ENCODE measurements at regions of chr7 and their contacts with region 1.

Region 1: GRCh38 chr7:148722340-148723165 is 23.9 kb downstream of the CUL1 start:
- DNase-seq: peak in 1 of 2 donors; percentile 46
- ATAC-seq: peak in 1 of 3 donors; percentile 12
- H3K4me3 ChIP-seq: no peak overlapping the region
- H3K4me3 Mint-ChIP-seq: peak overlapping the region; percentile 50
- H3K27ac ChIP-seq: no peak overlapping the region
- H3K27ac Mint-ChIP-seq: peak overlapping the region; percentile 63 to 77
- H3K4me1 ChIP-seq: peaks cover 49% of the 10 kb centered on the region
- H3K4me1 Mint-ChIP-seq: peaks cover 86 to 92% of the 10 kb centered on the region in 2 donors
- H3K27me3 ChIP-seq: no peaks in the 10 kb centered on the region
- H3K27me3 Mint-ChIP-seq: no peaks in the 10 kb centered on the region
- CTCF ChIP-seq: no peak

Region 2: GRCh38 chr7:148708026-148708885 is 14.3 kb before region 1 on chr7:
- intact Hi-C with region 1: loop called (anchors 1 kb)
- DNase-seq: no peak
- ATAC-seq: peak; percentile 77 to 82 (median 78)
- H3K4me3 ChIP-seq: no peak overlapping the region
- H3K4me3 Mint-ChIP-seq: peak overlapping the region; percentile 63
- H3K27ac ChIP-seq: peak overlapping the region; percentile 0
- H3K27ac Mint-ChIP-seq: peak overlapping the region; percentile 56 to 86
- H3K4me1 ChIP-seq: peaks cover 23% of the 10 kb centered on the region
- H3K4me1 Mint-ChIP-seq: peaks cover 69 to 72% of the 10 kb centered on the region in 2 donors
- H3K27me3 ChIP-seq: no peaks in the 10 kb centered on the region
- H3K27me3 Mint-ChIP-seq: no peaks in the 10 kb centered on the region
- CTCF ChIP-seq: no peak

Region 3: DNA sequence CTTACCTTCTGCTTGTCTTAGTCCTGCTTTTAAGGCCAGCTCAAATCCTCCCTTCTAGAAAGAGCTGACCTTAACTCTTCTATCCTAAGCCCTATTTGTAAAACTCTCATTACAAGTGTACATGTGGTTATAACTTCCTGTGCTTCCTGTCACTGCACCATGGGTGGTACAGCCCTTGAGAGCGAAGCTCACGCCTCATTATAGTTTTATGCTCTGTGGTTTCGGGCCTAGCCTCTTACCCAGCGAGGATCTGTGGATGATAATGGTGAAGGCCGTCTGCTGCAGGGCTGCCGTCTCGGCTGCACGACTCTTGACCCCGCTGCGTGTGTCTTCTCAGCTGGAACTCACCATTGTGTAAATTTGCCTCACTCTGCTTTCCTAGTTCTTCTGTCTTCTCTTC is 50.8 kb after region 1 on chr7:
- intact Hi-C with region 1: loop called (anchors 10 kb)
- DNase-seq: peak; percentile 29 to 69
- ATAC-seq: peak; percentile 90 to 100 (median 94)
- H3K4me3 ChIP-seq: no peak overlapping the region
- H3K4me3 Mint-ChIP-seq: peak overlapping the region; percentile 84
- H3K27ac ChIP-seq: peak overlapping the region; percentile 69
- H3K27ac Mint-ChIP-seq: peak overlapping the region; percentile 85 to 88
- H3K4me1 ChIP-seq: peaks cover 20% of the 10 kb centered on the region
- H3K4me1 Mint-ChIP-seq: peaks cover 33 to 40% of the 10 kb centered on the region in 2 donors
- H3K27me3 ChIP-seq: no peaks in the 10 kb centered on the region
- H3K27me3 Mint-ChIP-seq: no peaks in the 10 kb centered on the region
- CTCF ChIP-seq: no peak